Caco-2 (cell line): ENCODE measurements at regions of chr6 and their contacts with region 1.

Region 1: GRCh38 chr6:30169658-30170614 is 6.6 kb downstream of the TRIM15 start:
- DNase-seq: peak in 1 of 2 experiments; percentile 51
- H3K4me3 ChIP-seq: no peak overlapping the region
- H3K4me3 Mint-ChIP-seq: no peak overlapping the region
- H3K27ac Mint-ChIP-seq: no peak overlapping the region
- H3K4me1 ChIP-seq: no peaks in the 10 kb centered on the region
- H3K4me1 Mint-ChIP-seq: no peaks in the 10 kb centered on the region
- H3K27me3 ChIP-seq: no peaks in the 10 kb centered on the region
- H3K27me3 Mint-ChIP-seq: no peaks in the 10 kb centered on the region
- CTCF ChIP-seq: peak; percentile 70 to 80

Region 2: GRCh38 chr6:30130887-30131862 is 38.8 kb before region 1 on chr6:
- CTCF ChIA-PET with region 1: interaction called, 3 read pairs
- POLR2A ChIA-PET with region 1: no interaction called
- intact Hi-C with region 1: loop called (anchors 1 kb)
- DNase-seq: peak; percentile 75 to 83
- H3K4me3 ChIP-seq: no peak overlapping the region
- H3K4me3 Mint-ChIP-seq: peak overlapping the region; percentile 54
- H3K27ac Mint-ChIP-seq: peak overlapping the region; percentile 44
- H3K4me1 ChIP-seq: peaks cover 21% of the 10 kb centered on the region
- H3K4me1 Mint-ChIP-seq: peaks cover 18% of the 10 kb centered on the region
- H3K27me3 ChIP-seq: no peaks in the 10 kb centered on the region
- H3K27me3 Mint-ChIP-seq: no peaks in the 10 kb centered on the region
- CTCF ChIP-seq: peak; percentile 97 to 99

Region 3: DNA sequence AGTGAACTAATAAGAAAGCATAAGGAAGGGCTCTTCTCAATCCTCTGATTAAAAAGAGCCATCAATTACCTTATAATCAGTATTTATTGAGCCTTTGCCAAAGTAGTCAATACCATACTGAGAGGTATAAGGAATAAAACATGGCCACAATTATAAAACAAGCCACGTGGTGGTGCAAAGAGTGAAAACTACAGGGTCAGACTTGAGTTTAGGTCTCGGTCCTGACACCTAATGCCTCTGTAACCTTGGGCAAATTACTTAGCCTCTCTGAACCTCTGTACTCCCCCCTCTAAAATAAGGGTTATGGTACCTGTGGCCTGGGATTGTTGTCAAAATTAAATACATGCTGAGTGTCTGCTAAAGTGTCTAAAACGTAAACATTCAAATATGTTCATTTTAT is 20.7 kb before region 1 on chr6:
- CTCF ChIA-PET with region 1: interaction called, 4 read pairs
- POLR2A ChIA-PET with region 1: no interaction called
- intact Hi-C with region 1: loop called (anchors 1 kb)
- DNase-seq: no peak
- H3K4me3 ChIP-seq: no peak overlapping the region
- H3K4me3 Mint-ChIP-seq: no peak overlapping the region
- H3K27ac Mint-ChIP-seq: no peak overlapping the region
- H3K4me1 ChIP-seq: peaks cover 2% of the 10 kb centered on the region; the same call in 1 of the 2 replicates
- H3K4me1 Mint-ChIP-seq: peaks cover 5% of the 10 kb centered on the region
- H3K27me3 ChIP-seq: no peaks in the 10 kb centered on the region
- H3K27me3 Mint-ChIP-seq: no peaks in the 10 kb centered on the region
- CTCF ChIP-seq: peak in 1 of 2 experiments; percentile 1

Region 4: GRCh38 chr6:30376486-30376885 is 206.6 kb after region 1 on chr6:
- CTCF ChIA-PET with region 1: no interaction called
- POLR2A ChIA-PET with region 1: no interaction called
- intact Hi-C with region 1: no loop called
- DNase-seq: no peak
- H3K4me3 ChIP-seq: no peak overlapping the region
- H3K4me3 Mint-ChIP-seq: no peak overlapping the region
- H3K27ac Mint-ChIP-seq: no peak overlapping the region
- H3K4me1 ChIP-seq: no peaks in the 10 kb centered on the region
- H3K4me1 Mint-ChIP-seq: no peaks in the 10 kb centered on the region
- H3K27me3 ChIP-seq: no peaks in the 10 kb centered on the region
- H3K27me3 Mint-ChIP-seq: peaks cover 6% of the 10 kb centered on the region
- CTCF ChIP-seq: no peak

Region 5: DNA sequence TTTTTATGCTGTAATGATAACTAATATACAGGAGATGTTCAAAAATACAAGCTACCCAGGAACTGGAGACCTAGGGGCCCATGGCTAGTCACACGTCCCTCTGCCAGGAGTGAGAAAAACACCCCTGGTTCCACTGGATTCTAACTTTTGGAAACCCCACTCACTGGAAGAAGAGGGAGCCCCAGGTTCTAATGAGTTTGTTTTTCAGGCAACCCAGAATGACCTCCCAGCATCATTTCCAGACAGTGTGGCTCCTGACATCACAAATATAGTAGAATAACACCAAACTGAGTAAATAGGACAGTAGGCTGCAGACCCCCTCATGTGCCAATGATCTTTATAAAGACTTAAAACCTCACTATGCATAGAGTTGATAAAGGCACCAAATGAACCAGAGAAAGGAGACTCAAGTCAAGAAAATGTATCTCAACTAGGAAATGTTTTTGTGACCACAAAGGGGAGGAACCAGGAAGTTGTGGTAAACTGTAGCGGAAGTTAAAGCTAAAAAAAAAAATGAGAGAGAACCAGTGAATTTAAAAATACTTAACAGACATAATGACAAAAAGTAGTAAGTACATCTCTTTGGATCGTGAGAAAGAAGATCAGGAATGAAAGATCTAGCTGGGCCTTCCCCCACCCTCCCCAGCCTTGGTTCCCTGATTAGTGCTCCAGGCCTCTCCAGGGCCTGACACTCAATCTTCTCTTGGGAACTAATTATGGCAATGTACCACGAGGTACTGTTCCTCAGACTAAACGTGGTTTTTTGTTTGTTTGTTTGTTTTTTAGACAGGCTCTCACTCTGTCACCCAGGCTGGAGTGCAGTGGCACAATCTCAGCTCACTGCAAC is 339.2 kb after region 1 on chr6:
- CTCF ChIA-PET with region 1: no interaction called
- POLR2A ChIA-PET with region 1: no interaction called
- intact Hi-C with region 1: no loop called
- DNase-seq: no peak
- H3K4me3 ChIP-seq: no peak overlapping the region
- H3K4me3 Mint-ChIP-seq: no peak overlapping the region
- H3K27ac Mint-ChIP-seq: no peak overlapping the region
- H3K4me1 ChIP-seq: no peaks in the 10 kb centered on the region
- H3K4me1 Mint-ChIP-seq: peaks cover 5% of the 10 kb centered on the region
- H3K27me3 ChIP-seq: no peaks in the 10 kb centered on the region
- H3K27me3 Mint-ChIP-seq: no peaks in the 10 kb centered on the region
- CTCF ChIP-seq: no peak

Region 6: GRCh38 chr6:30656513-30656912 is 486.6 kb after region 1 on chr6:
- CTCF ChIA-PET with region 1: no interaction called
- POLR2A ChIA-PET with region 1: no interaction called
- intact Hi-C with region 1: no loop called
- DNase-seq: no peak
- H3K4me3 ChIP-seq: no peak overlapping the region
- H3K4me3 Mint-ChIP-seq: no peak overlapping the region
- H3K27ac Mint-ChIP-seq: no peak overlapping the region
- H3K4me1 ChIP-seq: no peaks in the 10 kb centered on the region
- H3K4me1 Mint-ChIP-seq: no peaks in the 10 kb centered on the region
- H3K27me3 ChIP-seq: no peaks in the 10 kb centered on the region
- H3K27me3 Mint-ChIP-seq: no peaks in the 10 kb centered on the region
- CTCF ChIP-seq: no peak